ENCODE measurements at regions of chr6 and their contacts with region 1.

Region 1: DNA sequence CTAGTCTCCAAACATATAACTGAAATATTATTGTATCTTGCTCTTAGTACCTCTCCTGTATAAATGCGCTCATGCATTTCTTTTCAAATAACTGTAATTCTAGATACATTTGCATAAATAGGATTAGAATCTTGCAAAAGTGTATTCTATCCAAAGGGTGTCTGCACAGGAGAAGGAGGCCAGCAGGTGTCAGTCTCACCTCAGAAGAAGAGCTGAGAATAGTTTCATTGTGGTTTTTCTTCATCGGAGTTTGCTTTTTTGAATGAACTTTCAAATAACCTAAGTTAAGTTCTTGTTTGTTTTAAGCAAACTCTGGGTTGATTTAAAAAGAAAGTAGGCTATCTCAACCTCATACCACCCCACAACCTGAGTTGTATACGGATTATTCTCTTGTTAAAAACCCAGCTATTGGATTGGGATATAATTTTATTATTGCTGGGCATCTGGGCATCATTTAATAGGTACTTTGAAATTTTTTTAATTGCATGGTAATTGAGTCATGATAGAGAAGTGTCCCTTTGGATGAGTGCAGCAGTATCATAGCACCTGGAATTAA is 125.0 kb upstream of the MLIP start:
- DNase-seq: peak; percentile 39
- H3K4me3 ChIP-seq: no peak overlapping the region
- H3K27ac ChIP-seq: no peak overlapping the region
- H3K27me3 ChIP-seq: no peaks in the 10 kb centered on the region
- CTCF ChIP-seq: peak; percentile 88

Region 2: GRCh38 chr6:53741034-53741823 is 245.0 kb before region 1 on chr6:
- CTCF ChIA-PET with region 1: no interaction called
- POLR2A ChIA-PET with region 1: no interaction called
- DNase-seq: no peak
- H3K4me3 ChIP-seq: no peak overlapping the region
- H3K27ac ChIP-seq: no peak overlapping the region
- H3K27me3 ChIP-seq: no peaks in the 10 kb centered on the region
- CTCF ChIP-seq: no peak

Region 3: DNA sequence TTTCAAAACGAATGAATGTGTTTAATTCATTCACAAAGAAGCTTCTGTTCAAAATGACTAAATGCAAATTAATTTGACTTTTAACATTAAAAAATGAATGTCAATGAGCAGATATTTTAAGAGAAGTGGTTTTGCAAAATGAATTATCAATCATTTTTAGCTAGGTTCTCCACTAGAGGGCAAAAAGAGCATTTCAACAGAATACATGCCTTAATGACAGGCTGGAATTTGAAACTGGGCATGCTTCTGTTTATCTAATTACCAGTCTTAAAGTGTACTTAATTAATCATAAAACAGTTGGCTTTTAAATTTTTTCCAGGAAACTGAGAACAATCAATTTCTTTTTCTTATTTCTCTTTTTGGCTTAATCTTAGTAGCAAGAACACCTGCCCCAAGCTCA is 258.2 kb after region 1 on chr6:
- CTCF ChIA-PET with region 1: interaction called, 34 read pairs
- POLR2A ChIA-PET with region 1: no interaction called
- DNase-seq: no peak
- H3K4me3 ChIP-seq: no peak overlapping the region
- H3K27ac ChIP-seq: no peak overlapping the region
- H3K27me3 ChIP-seq: no peaks in the 10 kb centered on the region
- CTCF ChIP-seq: peak; percentile 70

Region 4: DNA sequence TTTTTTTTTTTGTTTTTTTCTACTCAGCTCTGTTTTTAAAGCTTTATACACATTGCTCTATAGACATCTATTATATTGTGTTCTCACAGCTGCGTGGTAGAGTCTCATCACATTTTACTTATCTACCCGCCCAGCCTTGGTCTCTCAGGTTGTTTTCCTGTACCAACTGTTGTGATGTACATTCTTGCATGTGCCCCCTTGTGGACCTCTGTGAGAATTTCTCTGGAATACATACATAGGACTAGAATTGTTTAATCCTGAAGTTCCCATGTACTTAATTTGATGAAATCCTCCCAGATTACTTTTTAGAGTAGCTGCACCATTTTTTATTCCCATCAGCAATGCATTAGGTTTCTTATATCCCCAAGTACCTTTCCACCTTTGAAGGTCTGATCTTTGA is 281.6 kb after region 1 on chr6:
- CTCF ChIA-PET with region 1: interaction called, 41 read pairs
- POLR2A ChIA-PET with region 1: no interaction called
- DNase-seq: no peak
- H3K4me3 ChIP-seq: no peak overlapping the region
- H3K27ac ChIP-seq: no peak overlapping the region
- H3K27me3 ChIP-seq: no peaks in the 10 kb centered on the region
- CTCF ChIP-seq: peak; percentile 60

Region 5: DNA sequence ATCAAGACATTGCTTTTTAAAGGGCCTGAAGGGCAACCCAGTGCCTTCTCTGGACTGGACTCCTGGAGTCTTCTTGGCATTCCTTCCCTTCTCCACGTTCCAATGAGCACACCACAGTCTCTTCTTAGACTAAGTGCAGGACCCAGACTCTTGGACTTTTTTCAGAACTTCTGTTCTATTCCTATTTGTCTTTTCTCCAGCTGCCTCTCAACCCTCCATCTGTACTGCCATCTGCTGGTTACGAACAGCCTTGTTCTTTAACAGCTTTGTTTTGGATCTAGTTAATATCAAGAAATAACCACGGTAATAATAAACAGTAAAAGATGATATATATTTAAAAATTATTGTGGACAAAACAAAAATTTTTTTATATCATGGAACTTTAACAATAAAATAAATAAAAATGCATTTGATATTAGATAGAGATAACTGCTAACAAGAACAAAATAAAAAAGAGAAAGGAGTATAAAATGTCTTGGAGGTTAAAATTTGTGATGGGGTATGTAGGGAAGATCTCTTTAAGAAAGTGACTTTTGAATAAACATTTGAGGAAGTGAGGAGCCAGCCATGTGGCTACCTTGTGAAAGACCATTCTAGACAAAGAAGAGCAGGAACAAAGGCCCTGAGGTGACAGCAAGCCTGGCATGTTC is 1083.0 kb after region 1 on chr6:
- CTCF ChIA-PET with region 1: interaction called, 16 read pairs
- POLR2A ChIA-PET with region 1: no interaction called
- DNase-seq: peak; percentile 23
- H3K4me3 ChIP-seq: no peak overlapping the region
- H3K27ac ChIP-seq: no peak overlapping the region
- H3K27me3 ChIP-seq: no peaks in the 10 kb centered on the region
- CTCF ChIP-seq: peak; percentile 83